Activated T-helper 1 cell treated with anti-CD3 and anti-CD28 coated beads, Interleukin-12 subunit alpha, Interleukin-12 subunit beta, Interleukin-2, Interleukin-4 antibody, amounts not matched to agents 30 ng/mL and 10 ng/mL and 1 ng/mL, durations not matched to agents 14 hours and 24 hours and 36 hours (primary cell): ENCODE measurements at regions of chr4 and their contacts with region 1.

Region 1: DNA sequence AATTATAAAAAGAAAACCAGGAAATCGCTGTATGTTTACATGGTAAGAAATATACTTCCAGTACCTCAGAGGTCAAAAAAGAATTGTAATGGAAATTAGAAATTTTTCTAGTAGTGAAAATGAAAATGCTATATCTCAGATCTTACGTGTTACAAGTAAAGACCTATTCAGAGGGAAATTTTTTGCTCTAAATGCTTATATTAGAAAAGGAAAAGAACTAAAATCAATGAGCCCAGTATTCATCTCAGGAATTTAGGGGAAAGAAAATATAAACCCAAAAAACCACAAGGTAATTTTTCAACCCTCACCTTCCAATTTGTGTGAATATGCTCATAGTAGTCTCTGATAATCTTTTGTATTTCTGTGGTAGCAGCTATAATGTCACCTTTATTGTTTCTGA is 145.6 kb downstream of the RAP1GDS1 start:
- DNase-seq: no peak
- H3K4me3 Mint-ChIP-seq: no peak overlapping the region
- H3K27ac Mint-ChIP-seq: no peak overlapping the region
- H3K4me1 Mint-ChIP-seq: peaks cover 25% of the 10 kb centered on the region
- H3K27me3 Mint-ChIP-seq: no peaks in the 10 kb centered on the region

Region 2: DNA sequence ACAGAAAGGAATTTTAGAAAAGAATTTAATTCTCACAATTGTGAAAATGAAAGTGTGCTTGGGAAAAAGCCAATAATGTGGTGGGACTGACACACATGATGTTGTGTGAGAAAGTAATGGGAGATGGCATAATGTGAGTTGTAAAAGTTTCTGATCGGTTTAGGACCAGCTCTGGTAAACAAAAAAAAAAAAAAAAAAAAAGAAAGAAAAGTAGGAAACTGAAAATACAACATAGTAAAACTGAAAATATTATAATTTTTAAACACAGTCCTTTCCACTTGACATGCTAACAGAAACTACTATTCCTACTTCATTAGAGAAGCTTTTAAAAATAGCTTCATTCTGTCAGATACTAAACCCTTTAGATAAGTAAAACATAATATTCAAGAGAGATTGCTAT is 117.4 kb before region 1 on chr4:
- intact Hi-C with region 1: loop called (anchors 5 kb)
- DNase-seq: no peak
- H3K4me3 Mint-ChIP-seq: no peak overlapping the region
- H3K27ac Mint-ChIP-seq: peak overlapping the region; percentile 67
- H3K4me1 Mint-ChIP-seq: peaks cover 43% of the 10 kb centered on the region
- H3K27me3 Mint-ChIP-seq: no peaks in the 10 kb centered on the region

Region 3: GRCh38 chr4:98300706-98301105 is 106.1 kb before region 1 on chr4:
- intact Hi-C with region 1: no loop called
- DNase-seq: no peak
- H3K4me3 Mint-ChIP-seq: no peak overlapping the region
- H3K27ac Mint-ChIP-seq: no peak overlapping the region
- H3K4me1 Mint-ChIP-seq: peaks cover 17% of the 10 kb centered on the region
- H3K27me3 Mint-ChIP-seq: no peaks in the 10 kb centered on the region

Region 4: GRCh38 chr4:98377559-98377958 is 29.3 kb before region 1 on chr4:
- intact Hi-C with region 1: loop called (anchors 1 kb)
- DNase-seq: no peak
- H3K4me3 Mint-ChIP-seq: no peak overlapping the region
- H3K27ac Mint-ChIP-seq: no peak overlapping the region
- H3K4me1 Mint-ChIP-seq: peaks cover 10% of the 10 kb centered on the region
- H3K27me3 Mint-ChIP-seq: no peaks in the 10 kb centered on the region

Region 5: GRCh38 chr4:98446499-98447375 is 39.9 kb after region 1 on chr4:
- intact Hi-C with region 1: loop called (anchors 1 kb)
- DNase-seq: peak; percentile 44
- H3K4me3 Mint-ChIP-seq: peak overlapping the region; percentile 67
- H3K27ac Mint-ChIP-seq: peak overlapping the region; percentile 90
- H3K4me1 Mint-ChIP-seq: peaks cover 43% of the 10 kb centered on the region
- H3K27me3 Mint-ChIP-seq: peaks cover 3% of the 10 kb centered on the region